ENCODE measurements at regions of chr9 and their contacts with region 1.

Region 1: DNA sequence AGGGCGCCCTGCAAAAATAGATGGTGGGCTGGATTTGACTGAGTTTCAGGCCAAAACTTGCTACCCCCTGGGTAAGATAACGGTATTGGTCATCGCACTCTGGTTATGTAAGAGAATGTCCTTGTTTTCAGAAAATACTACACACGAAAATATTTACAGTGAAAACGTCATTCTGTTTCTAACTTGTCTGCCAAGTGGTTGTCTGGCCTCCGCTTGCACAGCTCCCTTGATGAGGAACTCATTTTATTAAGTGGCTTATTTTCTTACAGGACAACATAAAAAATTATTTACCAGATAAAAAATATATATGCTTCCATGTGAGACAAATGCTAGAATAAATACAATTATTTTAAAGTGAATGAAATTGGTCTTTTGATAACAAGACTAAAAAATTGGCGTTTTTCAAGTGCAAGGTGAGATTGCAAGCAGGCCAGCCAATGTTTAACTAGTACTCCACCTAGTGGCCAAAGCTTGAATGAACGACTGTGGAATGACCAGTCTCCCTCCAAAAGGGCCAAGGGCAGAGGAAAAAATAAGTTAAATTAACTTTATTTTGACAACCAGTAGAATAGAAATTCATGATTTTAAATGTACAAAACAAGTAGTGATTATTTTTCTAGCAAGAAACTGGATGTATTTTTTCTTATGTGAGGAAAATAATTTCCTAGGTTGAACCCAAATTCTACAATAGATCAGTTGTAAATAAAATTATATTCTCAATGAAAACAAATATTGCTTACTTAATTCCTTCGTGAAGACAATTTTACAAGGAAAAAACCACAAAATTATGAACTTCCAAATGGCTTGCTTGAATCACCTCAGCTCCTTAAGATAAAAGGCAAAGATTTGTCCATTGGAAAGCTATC is 93.2 kb downstream of the ZFAND5 start:
- DNase-seq: peak; percentile 7
- H3K4me3 ChIP-seq: no peak overlapping the region
- H3K27ac ChIP-seq: no peak overlapping the region
- H3K27me3 ChIP-seq: no peaks in the 10 kb centered on the region
- CTCF ChIP-seq: peak; percentile 91

Region 2: GRCh38 chr9:72038890-72039410 is 232.9 kb before region 1 on chr9:
- CTCF ChIA-PET with region 1: interaction called, 164 read pairs
- POLR2A ChIA-PET with region 1: no interaction called
- DNase-seq: peak; percentile 61
- H3K4me3 ChIP-seq: no peak overlapping the region
- H3K27ac ChIP-seq: no peak overlapping the region
- H3K27me3 ChIP-seq: peaks cover 6% of the 10 kb centered on the region
- CTCF ChIP-seq: peak; percentile 96

Region 3: GRCh38 chr9:72415163-72415562 is 143.3 kb after region 1 on chr9:
- CTCF ChIA-PET with region 1: no interaction called
- POLR2A ChIA-PET with region 1: no interaction called
- DNase-seq: no peak
- H3K4me3 ChIP-seq: no peak overlapping the region
- H3K27ac ChIP-seq: no peak overlapping the region
- H3K27me3 ChIP-seq: no peaks in the 10 kb centered on the region
- CTCF ChIP-seq: no peak

Region 4: GRCh38 chr9:72753266-72753893 is 481.5 kb after region 1 on chr9:
- CTCF ChIA-PET with region 1: interaction called, 10 read pairs
- POLR2A ChIA-PET with region 1: no interaction called
- DNase-seq: no peak
- H3K4me3 ChIP-seq: no peak overlapping the region
- H3K27ac ChIP-seq: no peak overlapping the region
- H3K27me3 ChIP-seq: no peaks in the 10 kb centered on the region
- CTCF ChIP-seq: peak; percentile 46

Region 5: GRCh38 chr9:72826996-72827949 is 555.4 kb after region 1 on chr9:
- CTCF ChIA-PET with region 1: interaction called, 14 read pairs
- POLR2A ChIA-PET with region 1: no interaction called
- DNase-seq: no peak
- H3K4me3 ChIP-seq: no peak overlapping the region
- H3K27ac ChIP-seq: no peak overlapping the region
- H3K27me3 ChIP-seq: no peaks in the 10 kb centered on the region
- CTCF ChIP-seq: no peak